IMR-90 (cell line): ENCODE measurements at regions of chr12 and their contacts with region 1.

Region 1: GRCh38 chr12:10130042-10130441 is at the start of gene CLEC7A:
- DNase-seq: no peak
- ATAC-seq: no peak
- H3K4me3 ChIP-seq: no peak within 1 kb of the TSS
- H3K27ac ChIP-seq: no peak within 1 kb of the TSS
- H3K4me1 ChIP-seq: no peaks in the 10 kb centered on the region
- H3K27me3 ChIP-seq: peaks cover 5% of the 10 kb centered on the region; the same call in 1 of the 2 replicates
- CTCF ChIP-seq: no peak
- POLR2A ChIP-seq: no peak
- RAD21 ChIP-seq: no peak
- total RNA-seq, gene CLEC7A: not detected in 2 replicates

Region 2: GRCh38 chr12:10113080-10113479 is 17.0 kb before region 1 on chr12:
- CTCF ChIA-PET with region 1: no interaction called
- POLR2A ChIA-PET with region 1: interaction called, 5 read pairs
- dilution Hi-C with region 1: no loop called
- in situ Hi-C with region 1: no loop called
- intact Hi-C with region 1: loop called (anchors 2 kb)
- DNase-seq: peak; percentile 43
- ATAC-seq: peak; percentile 76
- H3K4me3 ChIP-seq: no peak overlapping the region
- H3K27ac ChIP-seq: no peak overlapping the region
- H3K4me1 ChIP-seq: no peaks in the 10 kb centered on the region
- H3K27me3 ChIP-seq: no peaks in the 10 kb centered on the region
- CTCF ChIP-seq: no peak
- POLR2A ChIP-seq: no peak
- RAD21 ChIP-seq: no peak